MCF 10A (cell line): ENCODE measurements at regions of chr3 and their contacts with region 1.

Region 1: DNA sequence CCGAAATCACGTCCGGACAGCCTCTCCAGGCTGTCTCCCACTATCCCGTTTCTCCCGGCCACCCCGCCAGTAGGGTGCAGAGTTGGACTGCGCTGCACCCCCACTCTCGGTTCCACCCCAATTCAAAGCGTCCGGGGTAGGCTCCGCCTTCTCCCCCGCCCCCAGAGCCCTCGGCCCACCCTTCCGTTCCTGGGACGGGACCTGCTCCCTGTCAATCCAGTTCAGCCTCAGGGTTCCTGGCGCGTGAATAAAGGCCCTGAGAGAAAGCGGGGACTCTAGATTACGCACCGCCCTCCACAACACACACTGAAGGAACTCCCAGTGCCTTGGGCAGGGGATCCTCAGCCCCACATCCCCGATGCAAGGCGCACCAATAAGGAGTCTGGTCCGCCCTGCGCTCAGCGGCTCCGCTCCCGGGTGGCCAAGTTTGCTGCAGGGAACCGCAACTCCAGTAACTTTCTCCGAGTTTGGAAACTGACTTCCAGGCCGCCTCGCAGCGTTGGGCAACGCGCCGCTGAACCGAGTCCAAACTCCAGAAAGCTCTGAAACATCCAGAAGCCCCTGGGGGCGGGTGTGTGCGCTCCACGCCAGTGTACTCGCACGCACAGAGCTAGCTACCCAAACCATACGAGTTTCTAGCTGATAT is 1.9 kb downstream of the ADAMTS9 start:
- DNase-seq: peak; percentile 91
- H3K4me3 Mint-ChIP-seq: peak overlapping the region; percentile 81
- H3K27ac Mint-ChIP-seq: peak overlapping the region; percentile 83
- H3K4me1 Mint-ChIP-seq: peaks cover 16% of the 10 kb centered on the region
- H3K27me3 Mint-ChIP-seq: no peaks in the 10 kb centered on the region
- CTCF ChIP-seq: peak; percentile 38

Region 2: GRCh38 chr3:65170390-65171042 is 484.6 kb after region 1 on chr3:
- CTCF ChIA-PET with region 1: interaction called, 3 read pairs
- POLR2A ChIA-PET with region 1: no interaction called
- intact Hi-C with region 1: loop called (anchors 1 kb)
- DNase-seq: peak; percentile 89
- H3K4me3 Mint-ChIP-seq: no peak overlapping the region
- H3K27ac Mint-ChIP-seq: peak overlapping the region; percentile 28
- H3K4me1 Mint-ChIP-seq: peaks cover 18% of the 10 kb centered on the region
- H3K27me3 Mint-ChIP-seq: no peaks in the 10 kb centered on the region
- CTCF ChIP-seq: peak; percentile 40